Gastrocnemius medialis (tissue), 4 donors: ENCODE measurements at regions of chr3 and their contacts with region 1.

Region 1: GRCh38 chr3:134600685-134601463 is 49.9 kb downstream of the KY start:
- DNase-seq: no peak
- ATAC-seq: peak; percentile 39 to 44
- H3K4me3 ChIP-seq: no peak overlapping the region
- H3K27ac ChIP-seq: no peak overlapping the region
- H3K4me1 ChIP-seq: no peaks in the 10 kb centered on the region
- H3K27me3 ChIP-seq: no peaks in the 10 kb centered on the region
- CTCF ChIP-seq: peak; percentile 82 to 99 (median 87)
- POLR2A ChIP-seq: no peak

Region 2: GRCh38 chr3:134618478-134619300 is 17.8 kb after region 1 on chr3:
- in situ Hi-C with region 1: no loop called
- intact Hi-C with region 1: no loop called
- DNase-seq: no peak
- ATAC-seq: no peak
- H3K4me3 ChIP-seq: no peak overlapping the region
- H3K27ac ChIP-seq: no peak overlapping the region
- H3K4me1 ChIP-seq: peaks cover 0 to 6% of the 10 kb centered on the region in 2 donors
- H3K27me3 ChIP-seq: no peaks in the 10 kb centered on the region
- CTCF ChIP-seq: no peak
- POLR2A ChIP-seq: no peak

Region 3: DNA sequence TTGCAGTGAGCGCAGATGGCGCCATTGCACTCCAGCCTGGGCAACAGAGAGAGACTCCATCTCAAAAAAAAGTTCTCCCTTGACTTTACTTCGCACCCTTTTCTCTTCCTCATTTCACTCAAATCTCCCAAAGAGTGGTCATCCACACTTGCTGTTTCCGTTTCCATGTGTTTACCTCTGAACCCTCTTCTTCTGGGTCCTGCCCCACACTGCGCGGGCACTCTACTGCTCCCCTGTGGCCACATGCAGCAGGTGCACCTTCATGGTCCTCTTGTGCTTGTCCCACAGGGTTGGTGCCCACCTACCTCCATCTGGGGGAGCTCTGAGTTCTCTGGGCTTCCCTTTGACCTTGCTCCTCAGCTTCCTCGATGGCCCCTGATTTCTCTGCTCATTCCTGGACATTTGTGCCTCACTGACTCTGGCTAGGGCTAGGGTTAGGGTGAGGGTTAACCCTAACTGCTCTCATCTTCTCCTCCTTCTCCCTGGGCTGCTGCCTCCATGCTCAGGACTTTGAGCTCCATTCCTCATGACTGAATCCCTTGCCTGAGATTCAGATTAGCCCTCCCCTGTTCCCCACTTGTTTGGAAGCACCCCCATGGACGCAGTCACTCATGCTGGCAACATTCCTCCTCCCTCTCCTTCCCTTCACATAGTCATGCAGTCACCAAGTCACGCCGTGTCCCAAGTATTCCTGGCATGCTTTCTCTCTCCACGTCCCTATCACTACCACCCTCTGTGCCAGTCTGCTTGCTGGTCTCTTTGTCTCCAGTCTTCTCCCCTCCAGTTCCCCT is 76.5 kb after region 1 on chr3:
- in situ Hi-C with region 1: no loop called
- intact Hi-C with region 1: loop called (anchors 5 kb)
- DNase-seq: peak in 1 of 2 donors; percentile 26
- ATAC-seq: peak; percentile 51 to 52
- H3K4me3 ChIP-seq: no peak overlapping the region
- H3K27ac ChIP-seq: no peak overlapping the region
- H3K4me1 ChIP-seq: peaks cover 17 to 24% of the 10 kb centered on the region in 2 donors
- H3K27me3 ChIP-seq: no peaks in the 10 kb centered on the region
- CTCF ChIP-seq: peak in 4 of 5 experiments; percentile 41 to 69 (median 62)
- POLR2A ChIP-seq: no peak

Region 4: DNA sequence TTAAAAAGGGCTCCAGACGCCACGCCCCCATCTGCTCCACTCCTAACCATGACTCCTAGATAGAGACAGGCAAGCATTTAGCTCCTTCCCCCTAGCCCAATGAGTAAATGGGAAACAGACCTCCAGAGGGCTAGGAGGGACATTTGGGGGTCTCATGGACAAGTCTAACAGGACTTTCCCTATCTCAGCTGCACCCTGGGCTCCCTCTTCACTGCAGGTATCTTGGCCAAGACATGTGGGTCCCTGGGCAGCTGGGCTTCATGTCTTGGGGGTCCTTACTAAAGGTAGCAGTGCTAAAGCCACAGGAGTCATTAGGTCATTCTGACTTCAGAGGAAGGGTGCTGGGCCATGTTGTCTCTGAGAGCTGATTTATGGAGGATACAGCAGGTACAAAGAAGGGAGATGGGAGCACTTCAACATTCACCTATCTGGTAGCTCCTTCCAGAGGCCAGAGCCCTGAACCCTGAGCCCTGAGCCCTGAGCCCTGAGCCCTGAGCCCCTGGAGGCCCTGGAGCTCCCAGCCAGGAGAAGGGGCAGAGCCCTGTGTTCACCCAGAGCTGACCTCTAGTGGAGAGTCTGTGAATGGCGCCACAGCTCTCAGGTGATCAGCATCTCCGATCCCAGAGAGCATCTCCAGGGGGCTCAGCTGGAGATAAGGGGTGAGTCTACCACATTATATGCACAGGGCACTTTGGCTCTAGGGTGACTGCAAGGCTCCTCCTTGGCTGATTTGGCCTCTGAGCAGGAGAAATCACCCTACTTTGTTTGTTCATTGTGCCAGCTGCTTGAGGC is 154.1 kb after region 1 on chr3:
- in situ Hi-C with region 1: loop called in 2 of 4 experiments (anchors 10 kb)
- intact Hi-C with region 1: loop called (anchors 2 kb)
- DNase-seq: peak in 1 of 2 donors; percentile 45
- ATAC-seq: peak; percentile 55 to 75
- H3K4me3 ChIP-seq: no peak overlapping the region
- H3K27ac ChIP-seq: no peak overlapping the region
- H3K4me1 ChIP-seq: peaks cover 12 to 18% of the 10 kb centered on the region in 2 donors
- H3K27me3 ChIP-seq: no peaks in the 10 kb centered on the region
- CTCF ChIP-seq: peak; percentile 61 to 74 (median 71)
- POLR2A ChIP-seq: no peak

Region 5: GRCh38 chr3:135503760-135504686 is 903.1 kb after region 1 on chr3:
- in situ Hi-C with region 1: no loop called
- intact Hi-C with region 1: loop called (anchors 10 kb)
- DNase-seq: peak; percentile 18 to 58
- ATAC-seq: peak; percentile 82 to 89
- H3K4me3 ChIP-seq: no peak overlapping the region
- H3K27ac ChIP-seq: no peak overlapping the region
- H3K4me1 ChIP-seq: peaks cover 0 to 5% of the 10 kb centered on the region in 2 donors
- H3K27me3 ChIP-seq: peaks cover 0 to 2% (median 0%) of the 10 kb centered on the region in 3 donors
- CTCF ChIP-seq: peak; percentile 55 to 76 (median 72)
- POLR2A ChIP-seq: no peak

Region 6: DNA sequence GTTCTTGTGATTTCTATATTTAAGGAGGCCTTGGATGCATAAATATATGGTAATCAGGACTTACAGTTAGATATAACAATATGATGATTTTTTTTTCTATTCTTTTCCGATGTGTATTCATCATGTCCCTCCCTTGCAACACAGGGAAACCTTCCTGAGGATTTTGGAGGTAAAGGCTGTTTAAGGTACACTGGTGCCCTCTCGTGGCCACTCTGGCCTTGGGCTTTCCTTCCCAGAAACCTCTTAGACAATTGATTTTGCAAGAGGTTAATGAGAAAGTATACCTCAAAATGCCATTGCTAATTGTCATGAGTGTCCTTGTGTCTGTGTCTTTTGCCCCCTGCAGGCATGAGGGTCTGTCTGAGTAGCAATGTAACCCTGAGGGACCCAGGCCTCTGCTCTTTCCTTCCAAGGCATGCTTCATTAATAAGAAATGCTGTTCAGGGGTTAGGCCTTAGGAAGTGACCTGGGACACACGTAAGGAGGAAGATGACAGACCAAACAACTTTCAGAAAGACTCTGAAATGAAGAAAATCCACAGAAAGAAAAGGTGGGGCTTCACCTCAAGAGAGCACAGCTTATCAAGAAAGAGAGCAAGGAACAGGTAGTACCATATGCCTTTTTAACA is 1294.3 kb after region 1 on chr3:
- in situ Hi-C with region 1: loop called (anchors 10 to 25 kb)
- intact Hi-C with region 1: loop called (anchors 1 kb)
- DNase-seq: peak; percentile 12 to 52
- ATAC-seq: peak; percentile 62 to 81
- H3K4me3 ChIP-seq: no peak overlapping the region
- H3K27ac ChIP-seq: no peak overlapping the region
- H3K4me1 ChIP-seq: no peaks in the 10 kb centered on the region
- H3K27me3 ChIP-seq: no peaks in the 10 kb centered on the region
- CTCF ChIP-seq: peak; percentile 56 to 85 (median 70)
- POLR2A ChIP-seq: no peak